MCF 10A (cell line): ENCODE measurements at regions of chr17 and their contacts with region 1.

Region 1: DNA sequence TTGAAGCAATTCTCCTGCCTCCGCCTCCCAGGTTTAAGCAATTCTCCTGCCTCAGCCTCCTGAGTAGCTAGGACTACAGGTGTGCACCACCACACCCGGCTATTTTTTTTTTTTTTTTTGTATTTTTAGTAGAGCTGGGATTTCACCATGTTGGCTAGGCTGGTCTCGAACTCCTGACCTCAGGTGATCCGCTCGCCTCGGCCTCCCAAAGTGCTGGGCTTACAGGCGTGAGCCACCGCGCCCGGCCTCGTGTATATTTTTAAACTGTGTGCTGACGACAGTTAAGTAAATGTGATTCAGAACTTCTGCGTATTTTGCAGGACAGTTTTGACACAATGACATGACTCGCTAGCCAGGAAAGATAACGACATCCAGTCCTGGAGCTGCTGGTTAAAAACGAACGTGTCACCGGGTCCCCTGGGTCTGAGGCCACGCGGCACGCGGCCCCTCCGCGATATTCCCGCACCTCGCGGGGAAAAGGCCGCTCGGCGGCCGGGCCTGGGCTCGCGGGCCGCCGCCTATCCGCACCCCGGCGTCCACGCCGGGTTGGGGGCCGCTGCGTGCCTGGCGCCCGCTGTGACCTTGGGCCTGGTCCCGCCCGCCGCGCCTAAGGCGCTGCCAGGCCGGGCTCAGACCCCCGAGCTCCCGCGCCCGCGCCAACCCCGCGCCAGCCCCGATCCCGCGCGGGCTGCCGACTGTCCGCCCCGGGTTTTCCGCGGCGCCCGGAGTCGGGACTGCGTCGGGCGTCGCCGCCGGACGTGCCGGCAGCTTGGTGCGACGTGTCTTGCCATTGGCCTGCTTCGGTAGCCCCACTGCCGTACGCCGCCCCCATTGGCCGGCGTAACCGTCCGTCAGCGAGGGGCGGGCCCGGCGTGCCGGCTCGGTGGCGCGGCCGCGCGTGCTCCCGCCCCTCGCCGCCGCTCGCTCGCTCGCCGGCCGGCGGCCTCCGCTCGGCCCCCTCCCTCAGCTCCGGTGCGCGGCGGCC is at the start of gene FOXK2:
- DNase-seq: peak; percentile 89
- H3K4me3 Mint-ChIP-seq: peak within 1 kb of the TSS; percentile 79
- H3K27ac Mint-ChIP-seq: peak within 1 kb of the TSS; percentile 61
- H3K4me1 Mint-ChIP-seq: peaks cover 15% of the 10 kb centered on the region
- H3K27me3 Mint-ChIP-seq: no peaks in the 10 kb centered on the region
- CTCF ChIP-seq: no peak
- total RNA-seq, gene FOXK2: 85.9 and 104 TPM in 2 replicates

Region 2: DNA sequence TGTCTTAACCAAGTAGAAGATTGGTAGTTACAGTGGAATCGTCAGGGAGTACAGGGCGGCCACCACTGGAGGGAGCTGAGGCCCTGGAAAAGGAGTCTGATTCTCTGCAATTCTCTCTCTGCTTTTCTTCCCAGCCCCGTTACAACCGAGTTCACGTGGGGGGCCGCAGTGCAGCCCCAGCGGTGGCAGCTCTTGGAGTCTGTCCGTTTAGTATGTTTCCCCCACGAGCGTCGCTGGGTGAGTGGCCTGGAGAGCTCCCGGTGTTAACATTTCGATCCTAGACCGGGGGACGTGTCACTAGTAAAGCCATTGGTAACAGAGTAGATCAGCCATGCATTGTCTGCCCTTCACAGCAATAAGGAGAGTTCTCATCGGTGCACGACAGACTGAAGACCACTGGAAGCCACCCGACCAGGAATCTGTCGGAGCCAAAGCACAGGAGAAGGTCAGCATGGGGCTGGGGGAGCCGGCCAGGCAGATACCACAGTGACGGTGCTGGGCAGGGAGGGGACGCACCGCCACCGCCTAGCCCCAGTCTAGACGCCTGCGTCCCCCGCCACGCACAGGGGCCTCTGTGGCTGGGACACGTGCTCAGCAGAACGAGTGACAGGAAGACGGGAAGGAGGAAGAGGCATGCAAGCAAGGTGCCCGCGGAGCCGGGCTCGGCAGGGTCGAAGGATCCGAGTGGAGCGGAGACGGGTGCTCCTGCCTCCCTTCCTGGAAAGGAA is 274.5 kb before region 1 on chr17:
- CTCF ChIA-PET with region 1: no interaction called
- POLR2A ChIA-PET with region 1: no interaction called
- intact Hi-C with region 1: no loop called
- DNase-seq: no peak
- H3K4me3 Mint-ChIP-seq: no peak overlapping the region
- H3K27ac Mint-ChIP-seq: peak overlapping the region; percentile 70
- H3K4me1 Mint-ChIP-seq: peaks cover 68% of the 10 kb centered on the region
- H3K27me3 Mint-ChIP-seq: no peaks in the 10 kb centered on the region
- CTCF ChIP-seq: peak; percentile 59

Region 3: DNA sequence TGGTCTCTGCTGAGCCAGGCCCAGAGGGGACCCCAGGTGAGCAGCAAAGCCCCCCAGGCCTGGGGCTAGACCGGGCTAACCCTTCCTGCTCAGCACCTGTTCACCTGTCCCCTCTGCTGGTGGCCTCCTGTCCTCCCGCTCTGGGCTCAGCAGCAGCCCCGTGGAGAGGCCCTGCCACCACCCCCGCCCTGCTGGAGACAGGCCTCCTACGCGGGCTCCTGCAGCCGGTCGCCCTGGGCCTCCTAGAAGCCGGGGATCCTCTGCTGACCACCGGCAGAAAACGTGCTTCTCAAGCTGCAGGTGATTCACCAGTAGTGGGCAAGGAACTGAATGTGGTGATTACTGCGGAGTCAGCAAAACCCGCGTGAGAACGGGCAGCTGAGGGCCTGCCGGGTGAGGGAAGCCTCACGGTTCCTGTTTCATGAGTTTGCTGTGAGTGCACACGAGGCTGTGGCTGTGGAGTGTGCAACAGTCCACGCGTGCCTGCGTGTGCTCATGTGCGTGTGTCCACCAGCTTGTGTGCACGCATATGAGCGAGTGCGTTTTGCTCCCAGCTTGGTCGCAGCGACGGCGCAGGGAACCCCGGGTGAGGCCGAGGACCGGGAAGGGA is 186.3 kb before region 1 on chr17:
- CTCF ChIA-PET with region 1: no interaction called
- POLR2A ChIA-PET with region 1: interaction called, 12 read pairs
- intact Hi-C with region 1: no loop called
- DNase-seq: peak; percentile 68
- H3K4me3 Mint-ChIP-seq: peak overlapping the region; percentile 85
- H3K27ac Mint-ChIP-seq: peak overlapping the region; percentile 85
- H3K4me1 Mint-ChIP-seq: peaks cover 16% of the 10 kb centered on the region
- H3K27me3 Mint-ChIP-seq: no peaks in the 10 kb centered on the region
- CTCF ChIP-seq: no peak

Region 4: DNA sequence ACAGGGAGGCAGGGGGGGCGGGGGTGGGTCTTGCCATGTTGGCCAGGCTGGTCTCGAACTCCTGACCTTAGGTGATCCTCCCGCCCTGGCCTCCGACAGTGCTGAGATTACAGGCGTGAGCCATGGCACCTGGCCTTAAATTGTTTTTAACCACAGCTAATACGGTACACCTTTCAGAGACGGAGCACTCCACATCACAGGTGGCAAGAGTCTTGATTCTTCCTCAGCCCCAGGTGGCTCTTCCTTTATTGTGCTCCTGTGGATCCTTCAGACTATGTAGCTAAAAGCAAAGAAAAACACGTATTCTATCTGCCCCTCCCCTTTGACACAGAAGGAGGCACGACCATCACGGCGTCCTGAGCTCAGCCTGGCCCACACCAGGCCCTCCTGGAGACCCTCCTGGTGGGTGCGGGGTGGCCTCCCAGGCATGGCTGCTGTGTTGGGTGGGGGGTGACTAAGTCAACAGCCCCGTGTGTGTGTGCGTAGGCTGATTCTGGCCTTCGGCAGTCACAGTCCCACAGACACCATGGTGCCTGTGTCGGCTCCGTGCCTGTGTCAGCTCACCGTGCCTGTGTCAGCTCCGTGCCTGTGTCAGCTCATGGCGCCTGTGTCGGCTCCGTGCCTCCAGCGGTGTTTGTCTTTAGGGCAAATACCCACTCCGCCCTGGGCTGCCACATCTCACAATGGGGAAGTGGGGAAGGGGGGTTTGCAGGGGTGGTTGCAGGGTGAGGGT is 174.8 kb before region 1 on chr17:
- CTCF ChIA-PET with region 1: no interaction called
- POLR2A ChIA-PET with region 1: no interaction called
- intact Hi-C with region 1: no loop called
- DNase-seq: no peak
- H3K4me3 Mint-ChIP-seq: no peak overlapping the region
- H3K27ac Mint-ChIP-seq: no peak overlapping the region
- H3K4me1 Mint-ChIP-seq: peaks cover 8% of the 10 kb centered on the region
- H3K27me3 Mint-ChIP-seq: peaks cover 11% of the 10 kb centered on the region
- CTCF ChIP-seq: no peak

Region 5: GRCh38 chr17:82457997-82458864 is 60.9 kb before region 1 on chr17 and contains the start of gene NARF:
- CTCF ChIA-PET with region 1: no interaction called
- POLR2A ChIA-PET with region 1: interaction called, 27 read pairs
- intact Hi-C with region 1: no loop called
- DNase-seq: peak; percentile 99
- H3K4me3 Mint-ChIP-seq: peak within 1 kb of the TSS; percentile 83
- H3K27ac Mint-ChIP-seq: peak within 1 kb of the TSS; percentile 90
- H3K4me1 Mint-ChIP-seq: peaks cover 12% of the 10 kb centered on the region
- H3K27me3 Mint-ChIP-seq: no peaks in the 10 kb centered on the region
- CTCF ChIP-seq: no peak
- total RNA-seq, gene NARF: 20.6 TPM in 2 replicates

Region 6: GRCh38 chr17:82494236-82495055 is 24.7 kb before region 1 on chr17:
- CTCF ChIA-PET with region 1: interaction called, 4 read pairs
- POLR2A ChIA-PET with region 1: interaction called, 128 read pairs
- intact Hi-C with region 1: no loop called
- DNase-seq: peak; percentile 96
- H3K4me3 Mint-ChIP-seq: no peak overlapping the region
- H3K27ac Mint-ChIP-seq: peak overlapping the region; percentile 87
- H3K4me1 Mint-ChIP-seq: peaks cover 39% of the 10 kb centered on the region
- H3K27me3 Mint-ChIP-seq: no peaks in the 10 kb centered on the region
- CTCF ChIP-seq: peak; percentile 98

Region 7: DNA sequence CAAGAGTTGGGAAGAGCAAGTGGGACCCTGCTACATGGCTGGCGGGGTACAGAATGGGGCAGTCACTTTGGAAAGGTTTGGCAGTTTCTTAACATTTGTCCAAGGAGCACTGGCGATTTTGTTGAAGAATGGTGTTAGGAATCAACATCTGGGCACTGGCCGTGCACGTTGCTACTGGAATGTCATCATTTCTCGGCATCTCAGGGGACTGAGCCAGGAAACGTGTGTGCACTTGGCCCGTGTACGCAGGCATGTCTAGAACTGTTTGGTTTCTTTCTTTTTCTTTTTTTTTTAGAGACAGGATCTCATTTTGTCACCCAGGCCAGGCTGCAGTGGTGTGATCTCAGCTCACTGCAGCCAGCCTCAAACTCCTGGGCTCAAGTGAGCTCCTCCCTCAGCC is 16.9 kb before region 1 on chr17:
- CTCF ChIA-PET with region 1: interaction called, 3 read pairs
- POLR2A ChIA-PET with region 1: interaction called, 128 read pairs
- intact Hi-C with region 1: no loop called
- DNase-seq: peak; percentile 86
- H3K4me3 Mint-ChIP-seq: no peak overlapping the region
- H3K27ac Mint-ChIP-seq: peak overlapping the region; percentile 74
- H3K4me1 Mint-ChIP-seq: peaks cover 13% of the 10 kb centered on the region
- H3K27me3 Mint-ChIP-seq: no peaks in the 10 kb centered on the region
- CTCF ChIP-seq: no peak

Region 8: GRCh38 chr17:82985973-82986372 is 466.9 kb after region 1 on chr17:
- CTCF ChIA-PET with region 1: no interaction called
- POLR2A ChIA-PET with region 1: no interaction called
- intact Hi-C with region 1: no loop called
- DNase-seq: no peak
- H3K4me3 Mint-ChIP-seq: no peak overlapping the region
- H3K27ac Mint-ChIP-seq: no peak overlapping the region
- H3K4me1 Mint-ChIP-seq: no peaks in the 10 kb centered on the region
- H3K27me3 Mint-ChIP-seq: no peaks in the 10 kb centered on the region
- CTCF ChIP-seq: no peak